ENCODE measurements at regions of chr11 and their contacts with region 1.

Region 1: DNA sequence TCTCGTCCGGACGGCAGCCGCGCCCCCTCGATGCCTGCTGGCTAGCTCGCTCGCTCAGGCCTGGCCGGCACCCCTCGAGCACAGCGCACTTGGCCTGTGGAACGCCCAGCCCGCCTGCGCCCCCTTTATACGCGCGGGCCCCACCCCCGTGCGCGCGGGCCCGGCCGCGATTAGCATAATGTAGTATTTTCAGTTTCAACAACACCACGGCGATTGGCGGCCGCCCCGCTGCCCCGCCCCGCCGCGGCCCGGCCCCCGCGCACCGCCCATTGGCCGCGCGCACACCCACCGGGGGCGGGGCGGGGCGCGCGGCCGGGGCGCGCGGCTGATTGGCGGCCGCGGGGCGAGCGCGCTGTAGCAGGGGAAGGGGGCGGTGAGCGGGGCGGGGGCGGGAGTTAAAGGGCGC is at the start of gene CDKN1C:
- DNase-seq: peak; percentile 84 to 96 (median 90)
- H3K4me3 ChIP-seq: peak within 1 kb of the TSS in 3 of 4 donors; percentile 22 to 97 (median 96)
- H3K27ac ChIP-seq: peak within 1 kb of the TSS in 4 of 5 donors; percentile 67 to 79 (median 76)
- H3K4me1 ChIP-seq: peaks cover 6 to 28% of the 10 kb centered on the region in 2 donors
- H3K27me3 ChIP-seq: no peaks in the 10 kb centered on the region
- CTCF ChIP-seq: no peak
- POLR2A ChIP-seq: peak; percentile 97
- total RNA-seq, gene CDKN1C: 32.8 to 817 (median 527) TPM

Region 2: GRCh38 chr11:2532704-2533586 is 352.7 kb before region 1 on chr11:
- intact Hi-C with region 1: loop called (anchors 2 kb)
- DNase-seq: peak; percentile 88 to 96 (median 94)
- H3K4me3 ChIP-seq: peak overlapping the region in 1 of 4 donors; percentile 35
- H3K27ac ChIP-seq: peak overlapping the region; percentile 45 to 93 (median 85)
- H3K4me1 ChIP-seq: peaks cover 27 to 30% of the 10 kb centered on the region in 2 donors
- H3K27me3 ChIP-seq: no peaks in the 10 kb centered on the region
- CTCF ChIP-seq: peak; percentile 98 to 100 (median 99)
- POLR2A ChIP-seq: peak in 1 of 2 donors; percentile 9

Region 3: GRCh38 chr11:2699531-2700414 is 185.9 kb before region 1 on chr11 and contains the start of gene KCNQ1OT1:
- intact Hi-C with region 1: loop called in 1 of 2 experiments (anchors 10 kb)
- DNase-seq: peak; percentile 88 to 97 (median 93)
- H3K4me3 ChIP-seq: peak within 1 kb of the TSS; percentile 3 to 69 (median 36)
- H3K27ac ChIP-seq: peak within 1 kb of the TSS; percentile 12 to 96 (median 84)
- H3K4me1 ChIP-seq: peaks cover 0 to 34% of the 10 kb centered on the region in 2 donors
- H3K27me3 ChIP-seq: no peaks in the 10 kb centered on the region
- CTCF ChIP-seq: no peak
- POLR2A ChIP-seq: peak; percentile 95 to 97
- total RNA-seq, gene KCNQ1OT1: 0.55 to 10.6 (median 1.8) TPM

Region 4: DNA sequence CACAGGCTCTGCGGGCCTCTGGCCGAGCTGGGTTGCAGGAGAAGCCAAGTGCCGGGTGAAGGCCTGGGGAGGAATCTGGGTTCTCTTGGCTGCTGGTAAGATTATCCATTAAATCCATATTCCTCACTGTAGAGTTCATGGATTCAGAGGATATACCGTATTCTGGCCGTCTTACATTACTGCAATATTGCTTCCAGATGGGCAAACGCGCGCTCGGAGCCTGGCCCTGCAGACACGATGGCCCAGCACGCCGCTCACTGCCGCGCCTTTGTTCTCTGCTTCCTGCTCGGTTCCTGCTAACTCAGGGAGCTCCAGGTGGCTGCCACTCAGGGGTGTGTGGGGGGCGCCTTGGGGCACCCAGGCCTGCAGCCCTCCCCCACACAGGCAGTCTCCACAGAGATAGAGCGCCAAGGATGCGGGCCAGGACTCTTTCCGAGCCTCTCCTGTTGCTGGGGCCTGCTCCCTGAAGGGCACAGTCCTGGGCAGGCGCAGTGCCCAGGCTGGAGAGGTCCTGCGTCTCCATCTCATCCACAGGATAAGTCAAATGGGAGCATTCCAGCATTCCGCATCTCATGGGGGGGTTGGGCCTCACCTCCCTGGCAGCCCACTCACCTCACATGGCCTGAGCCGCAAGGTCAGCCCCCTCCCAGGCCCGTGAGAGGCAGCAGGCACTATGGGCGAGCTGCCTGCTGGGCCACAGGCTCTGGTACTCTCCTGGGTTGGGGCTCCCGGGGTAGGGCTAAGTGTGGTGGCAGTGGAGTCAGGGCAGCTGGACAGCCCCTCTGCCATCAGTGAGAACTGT is 171.8 kb before region 1 on chr11:
- intact Hi-C with region 1: loop called in 1 of 2 experiments (anchors 10 kb)
- DNase-seq: no peak
- H3K4me3 ChIP-seq: no peak overlapping the region
- H3K27ac ChIP-seq: no peak overlapping the region
- H3K4me1 ChIP-seq: no peaks in the 10 kb centered on the region
- H3K27me3 ChIP-seq: no peaks in the 10 kb centered on the region
- CTCF ChIP-seq: no peak
- POLR2A ChIP-seq: no peak

Region 5: GRCh38 chr11:3412837-3413236 is 527.2 kb after region 1 on chr11:
- intact Hi-C with region 1: no loop called
- DNase-seq: no peak
- H3K4me3 ChIP-seq: no peak overlapping the region
- H3K27ac ChIP-seq: no peak overlapping the region
- H3K4me1 ChIP-seq: no peaks in the 10 kb centered on the region
- H3K27me3 ChIP-seq: no peaks in the 10 kb centered on the region
- CTCF ChIP-seq: no peak
- POLR2A ChIP-seq: no peak